CD4-positive, alpha-beta memory T cell (primary cell): ENCODE measurements at regions of chr5 and their contacts with region 1.

Region 1: DNA sequence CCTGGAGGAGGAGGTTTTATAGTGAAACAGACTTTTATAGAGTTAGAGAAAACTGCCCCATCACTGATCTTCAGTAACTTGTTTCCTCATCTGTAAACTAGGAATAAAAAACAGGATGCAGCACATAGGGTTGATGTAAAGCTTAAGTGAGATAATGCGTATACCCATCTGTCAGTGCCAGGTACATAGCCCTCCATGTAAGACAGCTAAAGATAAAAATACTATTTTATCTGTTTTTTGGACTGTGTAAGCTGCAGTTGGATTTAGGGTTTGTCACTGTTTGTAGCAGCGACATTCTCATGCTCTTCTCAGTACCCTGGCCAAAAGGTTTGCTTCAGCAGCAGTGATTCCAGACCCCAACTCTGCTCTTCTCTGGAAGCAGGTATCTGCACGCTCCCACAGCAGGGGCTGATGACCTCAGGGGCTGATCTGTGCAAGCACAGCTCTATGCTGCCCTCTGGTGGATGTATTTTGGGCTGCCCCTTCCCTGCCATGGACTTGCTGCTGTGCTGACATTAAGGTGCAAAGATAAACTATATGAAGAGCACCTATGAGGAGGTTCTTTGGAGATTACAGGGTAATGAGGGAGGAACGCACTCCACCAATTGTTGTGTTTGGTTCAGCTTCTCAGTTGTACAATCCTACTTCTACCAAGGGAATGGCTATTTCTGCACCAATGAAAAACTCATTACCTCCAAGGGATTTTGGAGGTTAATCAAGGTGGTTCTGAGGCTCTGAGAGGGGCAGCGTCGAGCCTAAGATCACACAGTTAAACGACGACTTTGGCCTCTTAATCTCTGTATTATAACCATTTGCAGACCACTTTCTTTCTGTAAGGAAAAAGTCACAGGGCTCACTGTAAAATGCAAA is 13.1 kb downstream of the HMHB1 start:
- DNase-seq: peak; percentile 72 to 80 (median 75)
- H3K4me3 ChIP-seq: no peak overlapping the region
- H3K4me3 Mint-ChIP-seq: no peak overlapping the region
- H3K27ac ChIP-seq: no peak overlapping the region
- H3K27ac Mint-ChIP-seq: no peak overlapping the region
- H3K4me1 ChIP-seq: peaks cover 27% of the 10 kb centered on the region
- H3K4me1 Mint-ChIP-seq: peaks cover 16 to 19% (median 17%) of the 10 kb centered on the region in 4 donors
- H3K27me3 ChIP-seq: no peaks in the 10 kb centered on the region
- H3K27me3 Mint-ChIP-seq: peaks cover 0 to 2% of the 10 kb centered on the region in 2 donors

Region 2: GRCh38 chr5:143014017-143014651 is 811.0 kb before region 1 on chr5:
- CTCF ChIA-PET with region 1: interaction called, 11 read pairs
- POLR2A ChIA-PET with region 1: no interaction called
- intact Hi-C with region 1: loop called (anchors 1 kb)
- DNase-seq: no peak
- H3K4me3 ChIP-seq: no peak overlapping the region
- H3K4me3 Mint-ChIP-seq: no peak overlapping the region
- H3K27ac ChIP-seq: no peak overlapping the region
- H3K27ac Mint-ChIP-seq: peak overlapping the region in 5 of 7 donors; percentile 28 to 77 (median 48)
- H3K4me1 ChIP-seq: peaks cover 11% of the 10 kb centered on the region
- H3K4me1 Mint-ChIP-seq: peaks cover 6 to 13% (median 10%) of the 10 kb centered on the region in 4 donors
- H3K27me3 ChIP-seq: no peaks in the 10 kb centered on the region
- H3K27me3 Mint-ChIP-seq: no peaks in the 10 kb centered on the region

Region 3: DNA sequence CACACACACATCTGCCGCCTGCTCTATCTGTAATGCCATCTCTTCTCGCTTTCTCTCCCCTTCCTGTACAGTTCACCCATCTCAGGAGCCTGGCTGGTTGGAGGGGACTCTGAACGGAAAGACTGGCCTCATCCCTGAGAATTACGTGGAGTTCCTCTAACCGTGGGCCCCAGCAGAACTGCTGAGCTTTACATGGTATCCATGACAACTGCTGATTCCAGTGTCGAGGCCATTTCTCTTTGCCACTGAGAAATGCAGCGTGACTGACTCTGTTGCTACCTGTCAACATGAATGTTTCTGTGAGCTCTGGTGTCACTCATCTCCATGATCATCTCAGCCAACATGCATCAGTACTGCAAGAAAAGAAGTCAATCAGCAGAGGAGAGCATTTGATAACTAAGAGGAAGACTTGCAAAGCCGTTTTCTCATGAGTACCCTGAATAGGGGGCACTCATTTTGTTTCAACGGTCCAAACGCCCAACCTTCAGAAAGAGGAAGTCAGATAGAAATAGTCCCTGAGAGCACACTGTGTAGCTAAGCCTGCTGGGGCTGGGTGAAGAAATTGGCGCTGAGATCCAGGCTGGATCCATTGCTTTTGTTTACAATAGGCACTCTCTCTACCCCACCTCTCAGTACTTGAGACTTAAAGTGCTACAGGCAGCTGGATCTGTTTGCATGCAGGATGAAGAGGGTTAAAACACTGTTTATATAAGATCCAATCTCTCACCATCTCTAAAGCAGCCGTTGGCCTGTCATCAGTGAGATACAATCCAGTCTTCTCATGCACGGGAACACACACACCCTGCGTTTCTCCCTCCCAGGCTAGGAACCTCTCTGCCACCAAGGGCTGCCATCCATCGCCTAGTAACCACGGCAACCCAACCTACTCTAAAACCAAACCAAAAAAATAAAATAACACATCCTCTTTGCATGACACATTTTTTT is 602.5 kb before region 1 on chr5:
- CTCF ChIA-PET with region 1: no interaction called
- POLR2A ChIA-PET with region 1: no interaction called
- intact Hi-C with region 1: loop called (anchors 10 kb)
- DNase-seq: peak; percentile 81 to 95 (median 85)
- H3K4me3 ChIP-seq: peak overlapping the region in 1 of 2 donors; percentile 42
- H3K4me3 Mint-ChIP-seq: peak overlapping the region; percentile 41 to 85 (median 74)
- H3K27ac ChIP-seq: peak overlapping the region; percentile 91
- H3K27ac Mint-ChIP-seq: peak overlapping the region; percentile 95 to 100 (median 98)
- H3K4me1 ChIP-seq: peaks cover 56% of the 10 kb centered on the region
- H3K4me1 Mint-ChIP-seq: peaks cover 34 to 65% (median 50%) of the 10 kb centered on the region in 4 donors
- H3K27me3 ChIP-seq: no peaks in the 10 kb centered on the region
- H3K27me3 Mint-ChIP-seq: peaks cover 0 to 1% of the 10 kb centered on the region in 2 donors

Region 4: DNA sequence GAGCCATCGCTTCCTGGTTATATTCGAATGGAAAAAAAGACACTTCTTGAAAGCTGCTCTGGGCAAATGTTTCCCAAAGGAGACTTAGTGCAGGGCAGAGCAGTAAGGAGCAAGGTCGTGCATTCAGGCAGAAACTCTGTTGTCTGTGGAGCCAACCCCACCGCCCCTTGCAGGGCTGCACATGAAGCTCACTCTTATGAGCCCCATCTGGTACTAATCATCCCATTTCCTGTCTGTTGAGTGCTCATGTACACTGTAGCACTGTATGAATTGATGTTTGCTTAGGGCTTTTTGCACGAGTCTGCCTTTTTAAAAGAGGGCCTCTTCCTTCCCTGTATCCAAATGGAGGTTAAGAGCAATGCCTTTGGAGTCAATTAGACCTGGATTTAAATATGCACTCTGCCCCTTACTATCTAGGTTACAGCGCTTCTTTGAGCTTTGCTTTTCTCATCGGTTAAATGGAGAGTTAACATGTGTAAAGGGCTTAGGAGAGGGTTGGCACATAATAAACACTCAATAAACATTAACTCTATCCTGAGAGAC is 12.3 kb after region 1 on chr5:
- CTCF ChIA-PET with region 1: interaction called, 23 read pairs
- POLR2A ChIA-PET with region 1: interaction called, 4 read pairs
- intact Hi-C with region 1: no loop called
- DNase-seq: no peak
- H3K4me3 ChIP-seq: no peak overlapping the region
- H3K4me3 Mint-ChIP-seq: no peak overlapping the region
- H3K27ac ChIP-seq: no peak overlapping the region
- H3K27ac Mint-ChIP-seq: no peak overlapping the region
- H3K4me1 ChIP-seq: no peaks in the 10 kb centered on the region
- H3K4me1 Mint-ChIP-seq: peaks cover 0 to 2% (median 0%) of the 10 kb centered on the region in 4 donors
- H3K27me3 ChIP-seq: no peaks in the 10 kb centered on the region
- H3K27me3 Mint-ChIP-seq: peaks cover 0 to 1% of the 10 kb centered on the region in 2 donors

Region 5: GRCh38 chr5:143850050-143850683 is 25.1 kb after region 1 on chr5:
- CTCF ChIA-PET with region 1: no interaction called
- POLR2A ChIA-PET with region 1: no interaction called
- intact Hi-C with region 1: no loop called
- DNase-seq: no peak
- H3K4me3 ChIP-seq: no peak overlapping the region
- H3K4me3 Mint-ChIP-seq: peak overlapping the region in 7 of 8 donors; percentile 33 to 72 (median 57)
- H3K27ac ChIP-seq: no peak overlapping the region
- H3K27ac Mint-ChIP-seq: no peak overlapping the region
- H3K4me1 ChIP-seq: peaks cover 6% of the 10 kb centered on the region
- H3K4me1 Mint-ChIP-seq: peaks cover 0 to 6% (median 4%) of the 10 kb centered on the region in 4 donors
- H3K27me3 ChIP-seq: no peaks in the 10 kb centered on the region
- H3K27me3 Mint-ChIP-seq: peaks cover 0 to 2% of the 10 kb centered on the region in 2 donors